Heart right ventricle (tissue), 16 donors: ENCODE measurements at regions of chr2 and their contacts with region 1.

Region 1: DNA sequence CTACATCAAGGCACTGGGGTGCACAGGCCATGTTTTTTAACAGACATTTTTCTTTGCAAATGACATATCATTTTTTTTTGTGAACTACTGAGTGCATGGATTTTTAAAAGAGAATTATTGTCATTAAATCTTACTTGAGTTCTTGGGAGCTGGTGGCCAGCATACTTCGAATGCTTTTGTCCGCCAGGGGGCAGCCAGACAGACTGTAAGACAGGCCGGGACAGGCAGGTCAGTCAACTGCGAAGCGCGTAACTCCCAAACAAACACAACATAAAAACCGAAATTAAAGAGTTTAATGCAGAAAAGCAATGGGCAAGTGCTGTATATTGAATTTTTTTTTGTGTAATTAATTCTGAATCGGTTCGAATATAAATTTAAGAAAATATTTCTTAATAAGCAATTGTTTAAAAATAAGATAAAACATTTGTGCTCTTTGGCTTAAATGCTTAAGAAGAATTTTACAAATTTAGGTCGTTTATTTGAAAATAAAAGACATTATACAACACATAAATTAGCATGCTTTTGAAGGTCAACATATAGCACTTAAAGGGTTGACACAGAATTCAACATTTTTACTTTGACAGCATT is 142.2 kb upstream of the PXDN start:
- DNase-seq: peak; percentile 58 to 65
- ATAC-seq: peak in 7 of 8 donors; percentile 43 to 67 (median 63)
- H3K4me3 ChIP-seq: no peak overlapping the region
- H3K27ac ChIP-seq: no peak overlapping the region
- H3K4me1 ChIP-seq: peaks cover 0 to 11% (median 0%) of the 10 kb centered on the region in 9 donors
- H3K27me3 ChIP-seq: peaks cover 0 to 14% (median 8%) of the 10 kb centered on the region in 7 donors
- CTCF ChIP-seq: peak; percentile 47 to 79 (median 73)

Region 2: GRCh38 chr2:1742681-1743395 is 143.7 kb before region 1 on chr2:
- intact Hi-C with region 1: no loop called
- DNase-seq: peak; percentile 77 to 78
- ATAC-seq: peak; percentile 44 to 78 (median 68)
- H3K4me3 ChIP-seq: peak overlapping the region; percentile 23 to 87 (median 74)
- H3K27ac ChIP-seq: peak overlapping the region; percentile 81 to 97 (median 91)
- H3K4me1 ChIP-seq: peaks cover 0 to 65% (median 47%) of the 10 kb centered on the region in 9 donors
- H3K27me3 ChIP-seq: peaks cover 0 to 43% (median 11%) of the 10 kb centered on the region in 7 donors
- CTCF ChIP-seq: peak; percentile 23 to 73 (median 48)

Region 3: GRCh38 chr2:1808981-1809422 is 77.5 kb before region 1 on chr2:
- intact Hi-C with region 1: no loop called
- DNase-seq: no peak
- ATAC-seq: no peak
- H3K4me3 ChIP-seq: no peak overlapping the region
- H3K27ac ChIP-seq: no peak overlapping the region
- H3K4me1 ChIP-seq: peaks cover 0 to 7% (median 0%) of the 10 kb centered on the region in 9 donors
- H3K27me3 ChIP-seq: peaks cover 0 to 13% (median 4%) of the 10 kb centered on the region in 7 donors
- CTCF ChIP-seq: no peak

Region 4: DNA sequence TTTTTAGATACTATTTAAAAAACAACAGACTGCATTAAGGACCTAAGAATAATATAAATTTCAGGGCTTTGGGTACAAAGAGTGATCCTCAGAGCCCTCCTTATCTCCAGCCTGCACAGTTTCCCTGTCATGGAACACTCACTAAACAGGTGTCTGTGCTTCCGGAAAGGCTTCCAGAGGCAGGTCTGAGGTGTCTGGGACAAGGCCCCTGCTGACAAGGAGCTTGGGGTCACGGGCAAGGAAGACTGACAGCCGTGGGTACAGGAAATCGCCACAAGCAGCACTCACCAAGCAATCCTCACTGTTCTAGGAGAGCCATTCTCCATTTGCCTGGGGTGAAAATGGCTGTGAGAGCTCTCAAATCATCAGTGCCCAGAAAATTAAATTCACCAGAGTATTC is 78.2 kb after region 1 on chr2:
- intact Hi-C with region 1: no loop called
- DNase-seq: no peak
- ATAC-seq: peak in 1 of 8 donors; percentile 40
- H3K4me3 ChIP-seq: no peak overlapping the region
- H3K27ac ChIP-seq: no peak overlapping the region
- H3K4me1 ChIP-seq: peaks cover 0 to 11% (median 0%) of the 10 kb centered on the region in 9 donors
- H3K27me3 ChIP-seq: no peaks in the 10 kb centered on the region
- CTCF ChIP-seq: no peak

Region 5: GRCh38 chr2:2101924-2102323 is 215.4 kb after region 1 on chr2:
- intact Hi-C with region 1: loop called in 1 of 10 experiments (anchors 10 kb)
- DNase-seq: no peak
- ATAC-seq: no peak
- H3K4me3 ChIP-seq: no peak overlapping the region
- H3K27ac ChIP-seq: no peak overlapping the region
- H3K4me1 ChIP-seq: peaks cover 0 to 4% (median under 1%) of the 10 kb centered on the region in 9 donors
- H3K27me3 ChIP-seq: peaks cover 0 to 6% (median 0%) of the 10 kb centered on the region in 7 donors
- CTCF ChIP-seq: peak in 5 of 9 donors; percentile 9 to 28 (median 13)

Region 6: GRCh38 chr2:2112416-2113105 is 226.1 kb after region 1 on chr2:
- intact Hi-C with region 1: loop called in 2 of 10 experiments (anchors 10 kb)
- DNase-seq: no peak
- ATAC-seq: no peak
- H3K4me3 ChIP-seq: no peak overlapping the region
- H3K27ac ChIP-seq: no peak overlapping the region
- H3K4me1 ChIP-seq: peaks cover 0 to 20% (median 9%) of the 10 kb centered on the region in 9 donors
- H3K27me3 ChIP-seq: peaks cover 0 to 30% (median 0%) of the 10 kb centered on the region in 7 donors
- CTCF ChIP-seq: no peak

Region 7: GRCh38 chr2:2291500-2292260 is 405.2 kb after region 1 on chr2:
- intact Hi-C with region 1: loop called in 5 of 10 experiments (anchors 1 to 5 kb)
- DNase-seq: peak in 1 of 2 donors; percentile 43
- ATAC-seq: peak; percentile 46 to 91 (median 84)
- H3K4me3 ChIP-seq: no peak overlapping the region
- H3K27ac ChIP-seq: no peak overlapping the region
- H3K4me1 ChIP-seq: peaks cover 0 to 3% (median 0%) of the 10 kb centered on the region in 9 donors
- H3K27me3 ChIP-seq: peaks cover 0 to 52% (median 19%) of the 10 kb centered on the region in 7 donors
- CTCF ChIP-seq: peak; percentile 14 to 72 (median 64)

Region 8: GRCh38 chr2:2613279-2614199 is 727.0 kb after region 1 on chr2:
- intact Hi-C with region 1: loop called in 1 of 10 experiments (anchors 5 kb)
- DNase-seq: peak; percentile 86 to 92
- ATAC-seq: peak; percentile 99 to 100 (median 100)
- H3K4me3 ChIP-seq: peak overlapping the region in 9 of 10 donors; percentile 26 to 56 (median 50)
- H3K27ac ChIP-seq: peak overlapping the region in 8 of 10 donors; percentile 36 to 77 (median 62)
- H3K4me1 ChIP-seq: peaks cover 0 to 7% (median 0%) of the 10 kb centered on the region in 9 donors
- H3K27me3 ChIP-seq: peaks cover 0 to 7% (median 0%) of the 10 kb centered on the region in 7 donors
- CTCF ChIP-seq: peak in 1 of 9 donors; percentile 6